Heart left ventricle (tissue), 16 donors: ENCODE measurements at regions of chr11 and their contacts with region 1.

Region 1: GRCh38 chr11:11022125-11022730 is 164.4 kb upstream of the ZBED5 start:
- DNase-seq: no peak
- ATAC-seq: peak in 1 of 4 donors; percentile 33
- H3K4me3 ChIP-seq: no peak overlapping the region
- H3K27ac ChIP-seq: no peak overlapping the region
- H3K4me1 ChIP-seq: no peaks in the 10 kb centered on the region
- H3K27me3 ChIP-seq: no peaks in the 10 kb centered on the region
- CTCF ChIP-seq: peak; percentile 29 to 68 (median 58)
- POLR2A ChIP-seq: no peak

Region 2: DNA sequence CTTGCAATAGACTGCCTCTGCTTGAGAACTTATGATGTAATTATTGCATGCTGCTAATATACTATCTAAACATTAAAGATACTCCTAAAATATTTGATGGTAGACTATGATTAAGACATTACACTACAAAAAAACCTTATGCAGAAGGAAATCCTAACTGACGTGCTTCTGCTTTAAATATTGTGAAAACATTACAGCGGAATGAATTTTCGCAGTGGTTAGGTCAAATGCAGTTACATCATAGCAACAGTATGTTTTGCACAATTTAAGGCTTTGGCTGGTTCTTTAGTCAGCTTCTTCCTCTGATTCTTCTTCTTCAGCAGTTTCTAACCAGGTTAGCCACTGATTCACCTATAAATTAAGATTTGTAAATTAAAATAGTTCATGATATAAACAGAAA is 224.7 kb before region 1 on chr11:
- intact Hi-C with region 1: loop called in 9 of 10 experiments (anchors 2 to 5 kb)
- DNase-seq: no peak
- ATAC-seq: no peak
- H3K4me3 ChIP-seq: no peak overlapping the region
- H3K27ac ChIP-seq: no peak overlapping the region
- H3K4me1 ChIP-seq: peaks cover 0 to 61% (median 16%) of the 10 kb centered on the region in 12 donors
- H3K27me3 ChIP-seq: no peaks in the 10 kb centered on the region
- CTCF ChIP-seq: no peak
- POLR2A ChIP-seq: no peak

Region 3: DNA sequence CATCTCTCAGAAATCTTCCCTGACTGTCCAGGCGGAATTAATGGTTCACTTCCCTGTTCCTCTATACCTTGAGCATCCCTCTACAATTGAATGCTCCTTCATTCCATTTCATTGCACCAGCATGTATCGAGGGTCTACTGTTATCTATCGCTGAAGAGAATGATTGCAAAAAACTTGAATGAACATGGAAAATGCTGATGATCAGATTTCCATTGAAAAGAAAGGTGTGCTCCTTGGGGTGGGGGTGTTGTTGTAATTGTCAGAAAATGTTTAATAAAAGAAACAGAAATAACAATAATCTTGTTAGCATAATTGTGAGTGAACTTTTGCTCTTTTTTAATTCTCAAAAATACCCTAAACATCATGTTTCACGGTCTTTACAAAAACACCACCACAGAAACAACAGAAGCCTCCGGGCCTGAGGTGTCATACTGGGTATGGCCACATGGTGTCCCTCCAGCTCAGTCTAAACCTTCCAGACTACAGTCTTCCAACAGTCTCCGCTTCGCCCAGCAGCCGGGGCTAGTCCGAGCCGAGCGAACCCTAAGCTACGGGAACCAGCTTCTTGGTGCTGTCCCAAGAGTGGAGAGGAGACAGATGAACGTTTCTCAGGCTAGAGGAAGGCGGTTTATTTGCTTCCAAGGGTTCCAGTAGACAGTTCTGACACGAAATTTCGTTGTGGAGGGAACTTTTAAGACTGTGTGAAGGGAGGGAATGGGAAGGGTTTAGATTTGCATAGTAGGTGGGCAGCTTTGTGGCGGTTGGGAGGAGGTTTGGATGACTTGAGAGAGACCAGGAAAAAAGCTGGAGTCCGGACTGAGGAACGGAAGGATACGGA is 88.6 kb before region 1 on chr11:
- intact Hi-C with region 1: loop called (anchors 1 to 5 kb)
- DNase-seq: peak; percentile 88 to 93 (median 91)
- ATAC-seq: peak; percentile 83 to 95 (median 92)
- H3K4me3 ChIP-seq: peak overlapping the region in 11 of 12 donors; percentile 27 to 60 (median 50)
- H3K27ac ChIP-seq: peak overlapping the region in 11 of 12 donors; percentile 30 to 84 (median 73)
- H3K4me1 ChIP-seq: peaks cover 0 to 24% (median 6%) of the 10 kb centered on the region in 12 donors
- H3K27me3 ChIP-seq: peaks cover 0 to 12% (median 0%) of the 10 kb centered on the region in 9 donors
- CTCF ChIP-seq: peak; percentile 88 to 99 (median 96)
- POLR2A ChIP-seq: peak in 1 of 2 donors; percentile 30

Region 4: DNA sequence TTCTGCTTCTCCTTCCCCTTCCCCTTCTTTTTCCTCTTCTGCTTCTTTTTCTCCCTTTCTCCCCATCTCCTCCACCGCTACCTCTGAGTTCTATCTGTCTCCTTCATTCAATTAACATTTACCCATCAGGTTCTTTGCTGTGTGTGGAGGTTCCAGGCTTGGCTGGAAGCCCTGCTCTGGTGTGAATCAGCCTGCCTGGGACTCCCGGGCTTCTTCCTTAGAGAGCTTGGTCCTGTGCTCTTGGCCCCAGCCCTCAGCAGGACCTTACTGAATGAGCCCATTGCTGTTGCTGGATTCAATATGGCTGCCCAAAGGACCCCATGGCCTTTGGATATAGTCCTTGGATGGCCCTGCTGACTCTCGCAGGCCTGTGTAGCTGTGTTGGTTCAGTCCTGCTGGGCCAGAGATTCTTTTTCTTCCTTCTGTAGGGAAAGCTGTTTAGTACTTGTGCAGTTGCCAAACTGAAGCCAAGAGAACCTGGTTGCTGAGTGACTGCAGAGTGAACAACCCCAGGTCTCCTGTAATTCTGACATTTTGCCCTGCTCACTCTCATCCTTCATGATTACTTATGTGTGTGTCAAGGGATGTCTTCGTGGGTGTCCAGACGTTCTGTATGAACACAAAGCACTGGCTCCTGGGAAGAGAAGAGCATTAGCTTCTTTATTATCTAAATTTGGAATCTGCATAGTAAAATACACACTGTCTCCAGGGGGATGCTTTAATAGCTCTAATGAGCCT is 83.4 kb before region 1 on chr11:
- intact Hi-C with region 1: loop called in 6 of 10 experiments (anchors 2 to 5 kb)
- DNase-seq: no peak
- ATAC-seq: no peak
- H3K4me3 ChIP-seq: no peak overlapping the region
- H3K27ac ChIP-seq: peak overlapping the region in 1 of 12 donors; percentile 71
- H3K4me1 ChIP-seq: peaks cover 0 to 13% (median 0%) of the 10 kb centered on the region in 12 donors
- H3K27me3 ChIP-seq: no peaks in the 10 kb centered on the region
- CTCF ChIP-seq: no peak
- POLR2A ChIP-seq: no peak